ENCODE measurements at regions of chr13 and their contacts with region 1.

Region 1: DNA sequence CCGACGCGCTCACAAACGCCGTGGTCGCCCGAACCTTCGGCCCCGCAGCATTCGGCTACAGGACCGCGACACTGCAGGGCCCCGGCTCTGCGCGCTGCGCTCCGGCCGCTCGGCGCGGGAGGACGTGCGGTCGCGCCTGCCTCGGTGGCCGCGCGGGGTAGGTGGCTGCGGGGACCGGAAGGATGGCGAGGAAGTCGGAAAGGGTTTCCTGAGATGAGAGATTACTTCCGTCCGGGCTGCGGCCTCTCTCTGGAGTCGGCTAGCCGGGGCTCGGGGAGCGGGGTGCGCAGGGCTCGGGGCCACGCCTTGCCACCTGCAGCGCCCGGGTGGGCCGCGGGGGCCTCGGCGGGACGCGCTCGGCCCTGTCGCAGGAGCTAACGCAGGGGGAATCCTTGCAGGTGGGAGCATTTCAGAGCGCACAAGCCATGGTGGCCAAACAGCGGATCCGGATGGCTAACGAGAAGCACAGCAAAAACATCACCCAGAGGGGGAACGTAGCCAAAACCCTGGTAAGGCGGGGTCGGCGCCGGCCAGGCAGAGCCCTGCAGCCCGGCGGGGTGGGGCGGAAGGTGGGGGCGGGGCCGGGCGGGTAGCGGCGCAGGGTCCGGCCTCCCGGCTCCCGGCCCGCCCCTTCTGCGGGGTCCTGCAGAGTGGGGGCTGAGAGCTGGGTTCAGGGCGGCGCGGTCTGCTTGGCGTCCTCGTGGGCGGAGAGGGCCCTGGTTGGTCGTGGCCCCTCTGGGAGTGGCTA is at the start of gene SERP2:
- DNase-seq: peak; percentile 40 to 77 (median 77)
- ATAC-seq: peak; percentile 80 to 85
- H3K4me3 ChIP-seq: peak within 1 kb of the TSS; percentile 78
- H3K27ac ChIP-seq: peak within 1 kb of the TSS; percentile 36
- H3K4me1 ChIP-seq: peaks cover 2% of the 10 kb centered on the region
- H3K27me3 ChIP-seq: no peaks in the 10 kb centered on the region
- total RNA-seq, gene SERP2: 19.4 to 28.2 (median 23.1) TPM

Region 2: DNA sequence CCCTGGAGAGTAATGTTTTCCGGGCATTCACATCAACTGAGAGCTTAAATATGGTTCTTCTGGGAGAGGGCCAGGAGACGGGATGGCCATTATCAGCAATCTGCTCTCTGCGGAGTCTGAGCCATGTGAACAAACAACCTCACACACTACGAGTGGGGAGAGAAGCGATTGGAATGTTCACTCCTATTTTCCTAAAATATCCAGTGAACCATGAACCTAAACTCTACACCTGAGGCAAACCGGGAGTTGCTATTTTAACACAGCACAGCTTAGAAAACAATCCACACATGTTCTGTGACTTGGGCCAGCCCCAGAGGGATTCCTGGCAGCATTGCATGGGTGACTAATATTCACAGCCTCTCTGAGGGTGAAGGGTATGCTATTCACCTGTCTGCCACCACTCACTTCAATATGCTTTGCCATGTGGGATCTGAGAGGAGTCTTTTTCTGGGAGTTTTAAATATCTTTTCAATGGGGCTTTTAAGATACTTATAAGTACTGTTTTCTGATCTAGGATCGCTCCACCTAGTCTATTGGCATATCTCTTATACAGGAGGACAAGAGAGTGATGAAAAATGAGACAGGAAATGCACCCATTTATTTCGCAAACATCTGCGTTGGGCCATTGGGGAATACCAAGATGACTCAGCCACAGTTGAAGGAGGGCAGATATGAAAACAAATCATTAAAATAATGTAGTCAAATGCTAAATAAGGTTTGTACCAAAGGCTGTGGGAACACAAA is 72.7 kb before region 1 on chr13:
- intact Hi-C with region 1: loop called in 1 of 4 experiments (anchors 10 kb)
- DNase-seq: peak; percentile 28 to 54 (median 53)
- ATAC-seq: peak; percentile 76 to 84
- H3K4me3 ChIP-seq: no peak overlapping the region
- H3K27ac ChIP-seq: peak overlapping the region; percentile 44
- H3K4me1 ChIP-seq: peaks cover 9% of the 10 kb centered on the region
- H3K27me3 ChIP-seq: no peaks in the 10 kb centered on the region

Region 3: GRCh38 chr13:44422755-44423532 is 49.2 kb after region 1 on chr13:
- intact Hi-C with region 1: no loop called
- DNase-seq: no peak
- ATAC-seq: peak in 1 of 2 donors; percentile 26
- H3K4me3 ChIP-seq: no peak overlapping the region
- H3K27ac ChIP-seq: no peak overlapping the region
- H3K4me1 ChIP-seq: no peaks in the 10 kb centered on the region
- H3K27me3 ChIP-seq: no peaks in the 10 kb centered on the region

Measured in right cardiac atrium (tissue), 5 donors.